ENCODE measurements at regions of chr12 and their contacts with region 1.

Region 1: GRCh38 chr12:124518051-124518932 is 49.1 kb downstream of the NCOR2 start:
- DNase-seq: peak; percentile 86 to 93 (median 92)
- H3K4me3 ChIP-seq: peak overlapping the region in 3 of 7 experiments; percentile 32 to 66 (median 59)
- H3K27ac ChIP-seq: peak overlapping the region in 1 of 2 experiments; percentile 71
- H3K4me1 ChIP-seq: peaks cover 0 to 72% (median 71%) of the 10 kb centered on the region in 4 experiments
- H3K27me3 ChIP-seq: no peaks in the 10 kb centered on the region

Region 2: GRCh38 chr12:124551268-124552144 is 33.2 kb after region 1 on chr12:
- CTCF ChIA-PET with region 1: interaction called, 13 read pairs
- POLR2A ChIA-PET with region 1: interaction called, 3 read pairs
- DNase-seq: peak in 2 of 3 donors; percentile 76 to 85
- H3K4me3 ChIP-seq: peak overlapping the region in 3 of 7 experiments; percentile 14 to 19 (median 15)
- H3K27ac ChIP-seq: peak overlapping the region; percentile 46 to 78
- H3K4me1 ChIP-seq: peaks cover 5 to 87% (median 79%) of the 10 kb centered on the region in 4 experiments
- H3K27me3 ChIP-seq: no peaks in the 10 kb centered on the region

Measured in common myeloid progenitor, CD34-positive (primary cell).